Activated naive CD4-positive, alpha-beta T cell treated with anti-CD3 and anti-CD28 coated beads for 36 hours (primary cell): ENCODE measurements at regions of chr5 and their contacts with region 1.

Region 1: GRCh38 chr5:77379558-77380061 is 112.5 kb downstream of the WDR41 start:
- DNase-seq: peak; percentile 86
- H3K4me3 Mint-ChIP-seq: no peak overlapping the region
- H3K27ac Mint-ChIP-seq: no peak overlapping the region
- H3K4me1 Mint-ChIP-seq: peaks cover 29% of the 10 kb centered on the region
- H3K27me3 Mint-ChIP-seq: peaks cover 14% of the 10 kb centered on the region

Region 2: DNA sequence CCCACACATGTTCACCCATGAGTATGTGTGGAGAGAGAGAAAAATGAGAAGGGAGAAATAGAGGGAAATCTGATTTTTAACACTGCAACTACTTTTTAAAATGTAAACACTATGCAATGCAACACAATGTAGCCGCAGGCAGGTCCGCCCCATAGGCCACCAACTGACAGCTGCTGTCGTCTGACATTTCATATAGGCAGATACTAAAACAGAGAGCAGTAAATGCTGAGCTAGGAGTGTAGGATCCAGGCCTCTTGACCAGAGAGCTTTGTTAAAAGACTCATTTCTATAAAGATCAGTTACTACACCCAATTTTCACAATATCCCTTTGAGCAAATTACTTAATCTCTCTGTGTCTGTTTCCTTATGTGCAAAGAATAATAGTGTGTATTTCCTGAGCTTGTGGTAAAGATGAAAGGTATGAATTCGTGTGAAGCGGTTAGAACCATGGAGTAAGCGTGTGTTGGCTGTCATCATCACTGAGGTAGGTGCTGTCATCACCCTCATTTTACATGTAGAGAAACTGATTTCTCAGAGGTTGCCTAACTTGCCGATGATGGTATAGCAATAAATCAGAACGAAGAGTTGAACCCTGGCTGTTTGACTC is 224.3 kb before region 1 on chr5:
- CTCF ChIA-PET with region 1: no interaction called
- intact Hi-C with region 1: loop called (anchors 1 kb)
- DNase-seq: peak; percentile 66
- H3K4me3 Mint-ChIP-seq: no peak overlapping the region
- H3K27ac Mint-ChIP-seq: peak overlapping the region; percentile 60
- H3K4me1 Mint-ChIP-seq: peaks cover 27% of the 10 kb centered on the region
- H3K27me3 Mint-ChIP-seq: no peaks in the 10 kb centered on the region

Region 3: DNA sequence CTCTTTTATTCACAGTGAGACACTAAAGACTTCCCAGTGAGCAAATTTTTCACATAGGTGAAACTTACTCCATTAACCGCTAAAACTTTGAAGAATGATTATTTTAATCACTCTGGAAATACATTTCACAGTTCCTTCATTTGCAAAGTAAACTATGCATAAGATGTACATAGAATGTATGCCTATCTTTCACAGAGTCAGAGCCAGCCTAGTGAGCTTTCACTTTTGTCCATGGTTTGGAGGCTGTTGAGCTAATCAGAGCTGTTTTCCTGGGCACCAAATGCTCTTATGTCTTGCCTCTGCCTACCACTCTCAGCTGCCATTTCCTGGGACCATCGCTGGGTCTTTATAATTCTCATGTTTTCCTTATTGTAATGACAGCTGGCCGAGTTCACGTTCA is 101.9 kb before region 1 on chr5:
- CTCF ChIA-PET with region 1: no interaction called
- intact Hi-C with region 1: loop called (anchors 2 kb)
- DNase-seq: no peak
- H3K4me3 Mint-ChIP-seq: no peak overlapping the region
- H3K27ac Mint-ChIP-seq: peak overlapping the region; percentile 38
- H3K4me1 Mint-ChIP-seq: peaks cover 21% of the 10 kb centered on the region
- H3K27me3 Mint-ChIP-seq: no peaks in the 10 kb centered on the region

Region 4: GRCh38 chr5:77328930-77329647 is 50.5 kb before region 1 on chr5:
- CTCF ChIA-PET with region 1: interaction called, 3 read pairs
- intact Hi-C with region 1: loop called (anchors 1 kb)
- DNase-seq: no peak
- H3K4me3 Mint-ChIP-seq: no peak overlapping the region
- H3K27ac Mint-ChIP-seq: peak overlapping the region; percentile 66
- H3K4me1 Mint-ChIP-seq: peaks cover 24% of the 10 kb centered on the region
- H3K27me3 Mint-ChIP-seq: peaks cover 4% of the 10 kb centered on the region

Region 5: DNA sequence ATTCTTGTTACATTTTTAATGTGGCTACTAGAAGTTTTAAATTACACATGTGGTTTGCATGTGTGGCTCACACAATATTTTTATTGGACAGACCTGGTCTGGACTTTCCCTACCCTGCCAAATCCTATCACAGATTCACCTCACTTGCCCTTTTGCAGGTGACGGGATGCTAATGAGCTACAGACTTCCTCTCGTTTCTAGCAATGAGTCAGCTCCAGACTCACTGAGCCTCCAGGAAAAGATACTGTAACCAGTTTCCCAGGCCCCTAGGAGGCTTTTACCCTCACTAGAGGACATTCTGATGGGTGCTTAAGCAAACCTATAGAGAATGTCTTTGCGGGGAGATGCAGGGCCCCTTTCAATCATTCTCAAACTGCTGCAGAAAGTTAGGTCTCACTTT is 22.9 kb before region 1 on chr5:
- CTCF ChIA-PET with region 1: interaction called, 3 read pairs
- intact Hi-C with region 1: loop called (anchors 1 kb)
- DNase-seq: peak; percentile 84
- H3K4me3 Mint-ChIP-seq: no peak overlapping the region
- H3K27ac Mint-ChIP-seq: peak overlapping the region; percentile 76
- H3K4me1 Mint-ChIP-seq: peaks cover 23% of the 10 kb centered on the region
- H3K27me3 Mint-ChIP-seq: peaks cover 3% of the 10 kb centered on the region

Region 6: GRCh38 chr5:77367733-77368132 is 11.9 kb before region 1 on chr5:
- CTCF ChIA-PET with region 1: interaction called, 5 read pairs
- intact Hi-C with region 1: loop called (anchors 1 kb)
- DNase-seq: peak; percentile 62
- H3K4me3 Mint-ChIP-seq: no peak overlapping the region
- H3K27ac Mint-ChIP-seq: no peak overlapping the region
- H3K4me1 Mint-ChIP-seq: peaks cover 11% of the 10 kb centered on the region
- H3K27me3 Mint-ChIP-seq: peaks cover 3% of the 10 kb centered on the region

Region 7: DNA sequence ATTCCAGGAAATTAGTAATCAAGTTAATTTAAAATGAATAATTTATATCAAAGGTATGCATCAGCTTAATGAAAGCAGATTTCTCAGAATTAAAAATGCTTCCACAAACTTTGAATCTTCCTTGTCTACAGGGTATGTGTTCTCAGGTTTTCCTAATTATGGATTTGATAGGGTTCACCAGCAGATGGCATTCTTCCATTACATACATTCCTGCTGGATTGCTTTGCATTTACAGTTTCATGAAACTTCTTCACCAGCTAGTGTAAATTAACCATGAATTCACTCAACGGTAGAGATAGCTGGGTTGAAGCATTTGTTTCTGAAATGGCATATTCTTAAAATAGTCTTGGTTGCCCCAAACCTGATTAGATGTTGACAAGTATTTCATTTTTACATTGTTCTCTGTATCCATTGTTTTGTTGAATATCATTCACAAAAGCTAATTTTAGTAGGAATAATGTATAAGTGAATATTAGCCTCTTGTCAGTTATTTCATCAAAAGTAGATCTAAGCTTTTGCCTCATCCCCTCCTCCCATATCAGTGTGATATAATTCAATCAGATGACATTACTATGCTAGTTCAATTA is 181.2 kb after region 1 on chr5:
- CTCF ChIA-PET with region 1: no interaction called
- intact Hi-C with region 1: no loop called
- DNase-seq: no peak
- H3K4me3 Mint-ChIP-seq: no peak overlapping the region
- H3K27ac Mint-ChIP-seq: no peak overlapping the region
- H3K4me1 Mint-ChIP-seq: no peaks in the 10 kb centered on the region
- H3K27me3 Mint-ChIP-seq: no peaks in the 10 kb centered on the region

Region 8: GRCh38 chr5:77663090-77663863 is 283.7 kb after region 1 on chr5:
- CTCF ChIA-PET with region 1: no interaction called
- intact Hi-C with region 1: loop called (anchors 10 kb)
- DNase-seq: no peak
- H3K4me3 Mint-ChIP-seq: no peak overlapping the region
- H3K27ac Mint-ChIP-seq: no peak overlapping the region
- H3K4me1 Mint-ChIP-seq: peaks cover 15% of the 10 kb centered on the region
- H3K27me3 Mint-ChIP-seq: peaks cover 27% of the 10 kb centered on the region